ENCODE measurements at regions of chr4 and their contacts with region 1.

Region 1: DNA sequence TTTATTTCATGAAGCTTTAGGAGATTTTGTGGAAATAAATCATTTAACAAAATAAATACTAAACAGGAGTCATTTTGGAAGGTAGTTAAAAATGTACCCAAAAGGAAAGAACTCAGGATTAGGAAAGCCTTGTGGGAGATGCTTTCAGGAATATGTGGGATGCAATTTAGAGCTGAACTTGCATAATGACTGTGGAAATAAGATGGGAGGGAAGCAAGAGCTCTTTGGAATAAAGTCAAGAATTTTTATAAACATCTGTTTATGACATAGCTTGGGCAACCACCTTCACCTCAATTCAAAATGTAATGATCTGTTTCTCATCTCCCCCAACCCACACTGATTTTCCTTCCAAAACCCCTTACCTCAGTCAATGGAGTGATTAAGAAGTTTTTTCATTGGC is 623.8 kb downstream of the FAT4 start:
- DNase-seq: no peak
- H3K4me3 Mint-ChIP-seq: no peak overlapping the region
- H3K27ac Mint-ChIP-seq: no peak overlapping the region
- H3K4me1 Mint-ChIP-seq: no peaks in the 10 kb centered on the region
- H3K27me3 Mint-ChIP-seq: no peaks in the 10 kb centered on the region

Region 2: DNA sequence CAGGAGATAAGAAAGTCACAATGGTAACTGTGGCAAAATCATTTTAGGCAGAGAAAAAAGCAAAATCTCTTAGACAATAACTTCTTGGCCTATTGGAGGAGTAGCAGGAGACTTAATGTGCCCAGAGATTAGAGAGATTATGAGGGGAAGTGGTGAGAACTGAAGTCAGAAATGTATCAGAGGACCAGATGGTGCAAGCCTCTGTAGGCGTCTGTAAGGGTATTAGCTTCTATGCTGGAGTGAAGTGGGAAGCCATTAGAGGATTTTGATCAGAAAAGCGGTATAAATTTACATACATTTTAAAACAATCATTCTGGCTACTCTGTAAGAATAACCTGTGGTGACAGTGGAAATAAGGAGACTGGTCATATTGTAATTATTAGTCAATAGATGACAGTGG is 387.1 kb before region 1 on chr4:
- CTCF ChIA-PET with region 1: no interaction called
- intact Hi-C with region 1: no loop called
- DNase-seq: no peak
- H3K4me3 Mint-ChIP-seq: no peak overlapping the region
- H3K27ac Mint-ChIP-seq: no peak overlapping the region
- H3K4me1 Mint-ChIP-seq: no peaks in the 10 kb centered on the region
- H3K27me3 Mint-ChIP-seq: no peaks in the 10 kb centered on the region

Region 3: DNA sequence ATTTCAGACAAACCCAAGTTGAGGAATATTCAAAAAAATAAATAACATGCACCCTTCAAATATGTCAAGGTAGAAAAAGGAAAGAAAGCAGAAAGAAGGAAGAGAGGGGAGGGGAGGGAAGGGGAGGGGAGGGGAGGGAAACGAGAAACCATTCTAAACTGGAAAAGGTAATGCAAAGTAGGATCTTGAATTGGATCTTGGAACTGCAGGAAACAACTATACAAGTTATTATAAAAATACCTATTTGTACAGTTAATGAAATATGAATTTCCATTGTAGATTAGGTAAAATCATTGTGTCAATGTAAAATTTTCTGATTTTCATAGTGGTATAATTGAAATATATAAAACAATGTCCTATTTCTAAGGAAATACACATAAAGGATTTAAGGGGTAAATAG is 44.6 kb after region 1 on chr4:
- CTCF ChIA-PET with region 1: no interaction called
- intact Hi-C with region 1: loop called (anchors 1 kb)
- DNase-seq: no peak
- H3K4me3 Mint-ChIP-seq: no peak overlapping the region
- H3K27ac Mint-ChIP-seq: no peak overlapping the region
- H3K4me1 Mint-ChIP-seq: no peaks in the 10 kb centered on the region
- H3K27me3 Mint-ChIP-seq: no peaks in the 10 kb centered on the region